ENCODE measurements at regions of chr13 and their contacts with region 1.

Region 1: GRCh38 chr13:97432917-97433726 is 847 bp upstream of the RAP2A start:
- DNase-seq: peak; percentile 100
- ATAC-seq: peak; percentile 78
- H3K4me3 ChIP-seq: peak overlapping the region; percentile 77
- H3K27ac ChIP-seq: peak overlapping the region; percentile 88
- H3K4me1 ChIP-seq: peaks cover 4% of the 10 kb centered on the region
- H3K27me3 ChIP-seq: no peaks in the 10 kb centered on the region
- CTCF ChIP-seq: no peak
- POLR2A ChIP-seq: no peak
- RAD21 ChIP-seq: no peak

Region 2: GRCh38 chr13:97109841-97110492 is 323.2 kb before region 1 on chr13:
- CTCF ChIA-PET with region 1: no interaction called
- POLR2A ChIA-PET with region 1: no interaction called
- dilution Hi-C with region 1: no loop called
- in situ Hi-C with region 1: no loop called
- intact Hi-C with region 1: loop called (anchors 1 kb)
- DNase-seq: peak; percentile 85
- ATAC-seq: peak; percentile 90
- H3K4me3 ChIP-seq: no peak overlapping the region
- H3K27ac ChIP-seq: no peak overlapping the region
- H3K4me1 ChIP-seq: peaks cover 27% of the 10 kb centered on the region
- H3K27me3 ChIP-seq: no peaks in the 10 kb centered on the region
- CTCF ChIP-seq: peak; percentile 98
- POLR2A ChIP-seq: peak; percentile 44; the same call in 1 of the 2 replicates
- RAD21 ChIP-seq: peak; percentile 97

Region 3: GRCh38 chr13:97235549-97236231 is 197.4 kb before region 1 on chr13:
- CTCF ChIA-PET with region 1: no interaction called
- POLR2A ChIA-PET with region 1: interaction called, 10 read pairs
- dilution Hi-C with region 1: no loop called
- in situ Hi-C with region 1: no loop called
- intact Hi-C with region 1: no loop called
- DNase-seq: no peak
- ATAC-seq: no peak
- H3K4me3 ChIP-seq: no peak overlapping the region
- H3K27ac ChIP-seq: no peak overlapping the region
- H3K4me1 ChIP-seq: peaks cover 30% of the 10 kb centered on the region
- H3K27me3 ChIP-seq: no peaks in the 10 kb centered on the region
- CTCF ChIP-seq: no peak
- POLR2A ChIP-seq: no peak
- RAD21 ChIP-seq: no peak

Region 4: GRCh38 chr13:97295283-97296182 is 137.6 kb before region 1 on chr13:
- CTCF ChIA-PET with region 1: no interaction called
- POLR2A ChIA-PET with region 1: no interaction called
- dilution Hi-C with region 1: no loop called
- in situ Hi-C with region 1: no loop called
- intact Hi-C with region 1: no loop called
- DNase-seq: peak; percentile 92
- ATAC-seq: peak; percentile 66
- H3K4me3 ChIP-seq: no peak overlapping the region
- H3K27ac ChIP-seq: no peak overlapping the region
- H3K4me1 ChIP-seq: peaks cover 18% of the 10 kb centered on the region
- H3K27me3 ChIP-seq: no peaks in the 10 kb centered on the region
- CTCF ChIP-seq: no peak
- POLR2A ChIP-seq: no peak
- RAD21 ChIP-seq: no peak

Region 5: DNA sequence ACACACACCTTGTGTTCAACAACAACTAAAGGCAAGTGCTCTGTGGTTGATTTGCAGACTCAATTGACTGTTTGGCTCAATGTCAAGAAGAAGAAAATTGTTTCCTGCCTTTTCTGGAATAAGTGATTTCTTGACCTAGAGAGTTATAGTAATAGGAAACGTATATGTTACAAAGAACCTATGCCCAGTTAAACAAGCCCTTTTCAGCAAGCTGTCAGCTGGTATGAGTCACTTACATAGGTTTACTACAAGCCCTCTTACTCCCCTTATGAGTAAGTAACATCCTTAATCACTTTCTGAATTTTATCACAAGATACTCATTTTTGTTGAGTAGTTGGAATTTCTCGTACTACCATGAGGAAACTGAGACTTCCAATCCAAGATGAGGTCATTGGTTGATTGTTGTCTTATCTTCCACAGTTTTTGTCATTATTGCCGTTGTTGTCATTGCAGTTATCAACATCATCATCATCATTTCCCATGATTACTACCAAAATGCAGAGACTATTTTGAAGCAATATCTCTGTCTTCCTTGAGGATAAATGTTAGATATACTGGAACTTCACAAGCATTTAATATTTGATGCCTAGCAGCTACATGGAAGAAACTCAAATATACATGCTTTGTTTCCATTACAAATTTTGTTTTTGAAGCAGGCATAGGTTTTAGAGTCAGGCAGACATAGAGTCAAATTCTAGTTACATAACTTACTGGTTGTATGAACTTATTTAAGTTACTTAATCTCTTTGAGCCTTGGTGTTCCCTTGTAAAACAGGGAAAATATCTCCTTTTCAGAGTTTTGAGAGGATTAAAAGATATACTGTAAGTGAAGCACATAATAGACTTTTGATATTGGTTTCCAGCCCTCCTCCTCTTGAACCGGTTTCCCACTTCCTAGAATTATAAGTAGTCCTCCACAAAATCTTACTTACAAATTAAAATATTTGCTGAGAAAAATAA is 106.8 kb after region 1 on chr13:
- CTCF ChIA-PET with region 1: no interaction called
- POLR2A ChIA-PET with region 1: no interaction called
- dilution Hi-C with region 1: no loop called
- in situ Hi-C with region 1: no loop called
- intact Hi-C with region 1: loop called (anchors 10 kb)
- DNase-seq: peak; percentile 88
- ATAC-seq: peak; percentile 49; the same call in 1 of the 2 replicates
- H3K4me3 ChIP-seq: no peak overlapping the region
- H3K27ac ChIP-seq: peak overlapping the region; percentile 21; the same call in 1 of the 2 replicates
- H3K4me1 ChIP-seq: peaks cover 24% of the 10 kb centered on the region
- H3K27me3 ChIP-seq: no peaks in the 10 kb centered on the region
- CTCF ChIP-seq: no peak
- POLR2A ChIP-seq: no peak
- RAD21 ChIP-seq: no peak

Region 6: GRCh38 chr13:97659602-97660001 is 226.5 kb after region 1 on chr13:
- CTCF ChIA-PET with region 1: no interaction called
- POLR2A ChIA-PET with region 1: no interaction called
- dilution Hi-C with region 1: no loop called
- in situ Hi-C with region 1: no loop called
- intact Hi-C with region 1: loop called (anchors 5 kb)
- DNase-seq: peak; percentile 21
- ATAC-seq: peak; percentile 71
- H3K4me3 ChIP-seq: no peak overlapping the region
- H3K27ac ChIP-seq: no peak overlapping the region
- H3K4me1 ChIP-seq: no peaks in the 10 kb centered on the region
- H3K27me3 ChIP-seq: peaks cover 20% of the 10 kb centered on the region
- CTCF ChIP-seq: peak; percentile 41
- POLR2A ChIP-seq: no peak
- RAD21 ChIP-seq: peak; percentile 52

Measured in IMR-90 (cell line).